GM13977 (cell line): ENCODE measurements at regions of chr19 and their contacts with region 1.

Region 1: GRCh38 chr19:17718947-17719711 is at the start of gene MAP1S:
- DNase-seq: peak; percentile 96
- CTCF ChIP-seq: no peak

Region 2: GRCh38 chr19:17775245-17775916 is 56.3 kb after region 1 on chr19:
- in situ Hi-C with region 1: loop called (anchors 10 kb)
- DNase-seq: no peak
- CTCF ChIP-seq: peak; percentile 57